ENCODE measurements at regions of chr14 and their contacts with region 1.

Region 1: DNA sequence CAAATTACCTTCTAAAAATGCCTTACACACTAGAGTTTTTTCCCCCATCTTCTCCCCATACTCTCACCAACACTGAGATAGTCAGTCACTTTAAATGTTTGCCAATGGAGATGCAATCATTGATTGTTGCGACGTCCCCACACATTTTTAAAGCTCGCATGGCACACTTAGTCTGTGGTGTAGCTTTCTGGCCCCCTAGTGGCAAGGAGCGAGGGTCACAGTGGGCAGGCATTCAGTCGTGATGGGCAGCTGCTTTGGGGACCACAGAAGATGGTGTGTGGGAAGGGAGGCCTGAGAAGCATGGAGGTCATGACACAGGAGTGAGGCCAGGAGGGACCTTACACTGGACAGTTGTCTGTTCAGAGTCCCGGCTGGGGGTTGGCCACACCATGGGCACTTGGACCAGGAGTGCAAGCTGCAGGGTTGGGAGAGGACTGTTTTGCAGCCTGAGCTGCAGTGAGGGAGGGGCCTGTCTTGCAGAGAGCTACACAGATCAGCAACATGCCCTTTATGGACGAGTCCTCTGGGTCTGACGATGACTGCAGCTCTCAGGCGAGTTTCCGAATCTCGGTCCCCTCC is 28.7 kb downstream of the PIGH start:
- DNase-seq: peak; percentile 57 to 66 (median 62)
- H3K4me3 ChIP-seq: no peak overlapping the region
- H3K4me3 Mint-ChIP-seq: no peak overlapping the region
- H3K27ac ChIP-seq: no peak overlapping the region
- H3K27ac Mint-ChIP-seq: no peak overlapping the region
- H3K4me1 ChIP-seq: no peaks in the 10 kb centered on the region
- H3K4me1 Mint-ChIP-seq: peaks cover 0 to 4% (median 3%) of the 10 kb centered on the region in 4 donors
- H3K27me3 ChIP-seq: no peaks in the 10 kb centered on the region
- H3K27me3 Mint-ChIP-seq: peaks cover 5 to 11% of the 10 kb centered on the region in 2 donors

Region 2: GRCh38 chr14:66359500-66359899 is 1211.9 kb before region 1 on chr14:
- CTCF ChIA-PET with region 1: interaction called, 3 read pairs
- POLR2A ChIA-PET with region 1: no interaction called
- intact Hi-C with region 1: loop called (anchors 5 kb)
- DNase-seq: peak in 4 of 5 donors; percentile 33 to 52 (median 49)
- H3K4me3 ChIP-seq: no peak overlapping the region
- H3K4me3 Mint-ChIP-seq: no peak overlapping the region
- H3K27ac ChIP-seq: no peak overlapping the region
- H3K27ac Mint-ChIP-seq: no peak overlapping the region
- H3K4me1 ChIP-seq: no peaks in the 10 kb centered on the region
- H3K4me1 Mint-ChIP-seq: no peaks in the 10 kb centered on the region
- H3K27me3 ChIP-seq: no peaks in the 10 kb centered on the region
- H3K27me3 Mint-ChIP-seq: peaks cover 3 to 7% of the 10 kb centered on the region in 2 donors

Region 3: DNA sequence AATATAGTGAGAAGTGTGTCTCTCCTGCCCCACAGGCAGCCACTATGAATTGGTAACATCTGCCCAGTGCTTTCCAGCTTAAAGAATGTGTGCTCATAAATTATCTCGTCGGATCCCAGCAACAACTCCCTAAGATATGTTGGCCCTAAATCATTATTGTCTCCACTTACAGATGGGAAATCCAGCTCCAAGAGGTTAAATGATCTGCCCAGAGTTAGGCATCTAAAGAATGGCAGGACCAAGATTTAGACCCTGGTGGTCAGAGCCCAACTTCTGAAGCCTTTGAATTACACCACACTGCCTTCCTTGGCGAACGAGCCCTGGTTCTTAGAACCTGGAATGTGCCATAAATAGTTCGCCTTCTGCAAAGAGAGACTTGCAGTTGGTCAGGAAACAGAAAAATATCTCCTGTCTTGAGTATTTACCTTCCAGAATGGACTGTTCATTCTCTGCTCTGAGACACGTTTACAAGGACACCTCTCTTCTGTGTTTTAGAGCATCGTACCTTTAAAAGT is 139.3 kb before region 1 on chr14:
- CTCF ChIA-PET with region 1: interaction called, 324 read pairs
- POLR2A ChIA-PET with region 1: interaction called, 13 read pairs
- intact Hi-C with region 1: no loop called
- DNase-seq: no peak
- H3K4me3 ChIP-seq: no peak overlapping the region
- H3K4me3 Mint-ChIP-seq: no peak overlapping the region
- H3K27ac ChIP-seq: no peak overlapping the region
- H3K27ac Mint-ChIP-seq: no peak overlapping the region
- H3K4me1 ChIP-seq: peaks cover 4% of the 10 kb centered on the region
- H3K4me1 Mint-ChIP-seq: no peaks in the 10 kb centered on the region
- H3K27me3 ChIP-seq: no peaks in the 10 kb centered on the region
- H3K27me3 Mint-ChIP-seq: peaks cover 4 to 19% of the 10 kb centered on the region in 2 donors

Region 4: DNA sequence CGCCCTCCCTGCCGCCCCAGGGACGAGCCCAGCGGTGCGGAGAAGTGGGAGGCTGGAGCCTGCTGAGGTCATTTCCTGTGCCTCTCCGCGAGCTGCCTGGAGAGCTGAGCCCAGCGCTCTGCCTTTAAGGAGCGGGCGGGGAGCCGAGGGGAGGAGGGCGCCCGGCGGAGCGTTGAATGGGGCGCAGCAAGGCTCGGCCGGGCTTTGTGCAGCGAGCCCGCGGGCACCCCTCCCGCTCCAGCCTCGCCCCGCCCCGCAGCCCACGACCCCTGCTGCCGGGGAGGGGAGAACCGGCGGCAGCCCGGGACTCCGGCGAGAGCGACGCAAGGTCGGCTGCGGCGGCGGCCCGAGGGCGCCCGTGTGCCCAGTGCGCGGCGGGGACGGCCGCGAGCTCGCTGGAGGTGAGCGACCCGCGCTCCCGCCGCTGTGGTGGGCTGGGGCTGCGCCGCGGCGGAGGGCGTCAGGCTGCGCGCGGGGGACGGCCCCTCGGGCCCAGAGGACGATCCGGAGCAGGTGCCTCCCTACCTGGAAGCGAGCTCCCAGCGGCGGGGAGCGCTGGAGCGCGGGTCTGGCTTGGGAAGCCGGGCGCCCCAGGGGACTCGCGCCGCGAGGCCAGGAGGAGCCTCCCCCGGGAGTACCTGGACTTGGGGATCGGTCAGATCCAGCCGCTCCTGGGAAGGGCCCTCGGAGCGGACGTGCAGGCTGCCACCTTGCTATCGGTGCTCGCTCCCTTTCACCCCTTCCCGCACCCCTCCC is 38.2 kb before region 1 on chr14 and contains the start of gene PLEKHH1:
- CTCF ChIA-PET with region 1: interaction called, 59 read pairs
- POLR2A ChIA-PET with region 1: no interaction called
- intact Hi-C with region 1: no loop called
- DNase-seq: peak; percentile 21 to 45 (median 24)
- H3K4me3 ChIP-seq: peak within 1 kb of the TSS in 1 of 2 donors; percentile 34
- H3K4me3 Mint-ChIP-seq: peak within 1 kb of the TSS; percentile 59 to 82 (median 74)
- H3K27ac ChIP-seq: no peak within 1 kb of the TSS
- H3K27ac Mint-ChIP-seq: peak within 1 kb of the TSS in 2 of 7 donors; percentile 47 to 64
- H3K4me1 ChIP-seq: peaks cover 10% of the 10 kb centered on the region
- H3K4me1 Mint-ChIP-seq: peaks cover 1 to 6% (median 4%) of the 10 kb centered on the region in 4 donors
- H3K27me3 ChIP-seq: peaks cover 11% of the 10 kb centered on the region
- H3K27me3 Mint-ChIP-seq: peaks cover 14 to 39% of the 10 kb centered on the region in 2 donors
- total RNA-seq, gene PLEKHH1: 0.22 to 0.41 TPM

Region 5: GRCh38 chr14:67583711-67584644 is 12.6 kb after region 1 on chr14:
- CTCF ChIA-PET with region 1: interaction called, 19 read pairs
- POLR2A ChIA-PET with region 1: no interaction called
- intact Hi-C with region 1: no loop called
- DNase-seq: peak in 4 of 5 donors; percentile 14 to 34 (median 30)
- H3K4me3 ChIP-seq: no peak overlapping the region
- H3K4me3 Mint-ChIP-seq: no peak overlapping the region
- H3K27ac ChIP-seq: no peak overlapping the region
- H3K27ac Mint-ChIP-seq: no peak overlapping the region
- H3K4me1 ChIP-seq: no peaks in the 10 kb centered on the region
- H3K4me1 Mint-ChIP-seq: no peaks in the 10 kb centered on the region
- H3K27me3 ChIP-seq: no peaks in the 10 kb centered on the region
- H3K27me3 Mint-ChIP-seq: no peaks in the 10 kb centered on the region